MCF 10A (cell line): ENCODE measurements at regions of chr6 and their contacts with region 1.

Region 1: GRCh38 chr6:123802697-123803496 is 768 bp upstream of the NKAIN2 start:
- DNase-seq: peak; percentile 88
- H3K4me3 Mint-ChIP-seq: peak overlapping the region; percentile 83
- H3K27ac Mint-ChIP-seq: no peak overlapping the region
- H3K4me1 Mint-ChIP-seq: peaks cover 21% of the 10 kb centered on the region
- H3K27me3 Mint-ChIP-seq: no peaks in the 10 kb centered on the region
- CTCF ChIP-seq: peak; percentile 85

Region 2: GRCh38 chr6:123316733-123317323 is 486.1 kb before region 1 on chr6:
- CTCF ChIA-PET with region 1: no interaction called
- POLR2A ChIA-PET with region 1: no interaction called
- intact Hi-C with region 1: no loop called
- DNase-seq: peak; percentile 33
- H3K4me3 Mint-ChIP-seq: no peak overlapping the region
- H3K27ac Mint-ChIP-seq: no peak overlapping the region
- H3K4me1 Mint-ChIP-seq: no peaks in the 10 kb centered on the region
- H3K27me3 Mint-ChIP-seq: no peaks in the 10 kb centered on the region
- CTCF ChIP-seq: peak; percentile 53

Region 3: GRCh38 chr6:123788319-123788718 is 14.6 kb before region 1 on chr6:
- CTCF ChIA-PET with region 1: interaction called, 14 read pairs
- POLR2A ChIA-PET with region 1: no interaction called
- intact Hi-C with region 1: no loop called
- DNase-seq: no peak
- H3K4me3 Mint-ChIP-seq: no peak overlapping the region
- H3K27ac Mint-ChIP-seq: no peak overlapping the region
- H3K4me1 Mint-ChIP-seq: no peaks in the 10 kb centered on the region
- H3K27me3 Mint-ChIP-seq: no peaks in the 10 kb centered on the region
- CTCF ChIP-seq: no peak

Region 4: DNA sequence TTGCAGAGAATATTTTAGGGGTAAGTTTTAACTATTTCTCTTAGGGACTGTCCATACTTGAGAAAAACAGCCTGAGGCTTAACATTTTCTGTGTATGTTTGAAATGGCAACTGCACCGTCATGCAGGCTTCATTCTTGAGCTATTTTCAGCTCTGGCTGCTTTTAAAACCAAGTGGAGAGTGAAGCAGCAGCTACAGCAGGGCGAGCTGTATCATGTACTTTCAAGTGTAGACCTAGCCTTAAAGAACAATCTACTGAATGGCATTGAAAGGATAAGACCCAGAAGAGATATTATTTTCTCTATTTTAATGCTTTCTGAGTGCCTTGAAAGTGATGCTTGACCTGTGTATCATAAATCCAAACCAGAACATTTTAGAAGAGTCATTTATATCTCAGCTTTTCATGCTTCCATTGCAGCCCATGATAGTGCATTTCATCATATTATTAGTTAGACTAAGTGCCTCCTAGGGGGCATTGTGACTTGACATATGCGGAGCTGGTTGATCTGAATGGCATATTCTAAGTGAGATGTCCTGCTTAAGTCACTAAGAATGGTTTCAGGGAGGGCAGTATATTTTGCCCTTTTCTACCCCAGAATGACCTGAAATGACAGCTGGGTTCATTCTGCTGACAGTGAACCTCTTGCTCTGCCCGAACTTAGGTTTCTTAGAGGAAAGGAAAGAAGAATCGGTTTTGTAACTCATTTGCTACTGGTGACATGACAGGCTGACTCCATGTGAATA is 86.0 kb after region 1 on chr6:
- CTCF ChIA-PET with region 1: no interaction called
- POLR2A ChIA-PET with region 1: no interaction called
- intact Hi-C with region 1: no loop called
- DNase-seq: no peak
- H3K4me3 Mint-ChIP-seq: no peak overlapping the region
- H3K27ac Mint-ChIP-seq: no peak overlapping the region
- H3K4me1 Mint-ChIP-seq: peaks cover 5% of the 10 kb centered on the region
- H3K27me3 Mint-ChIP-seq: no peaks in the 10 kb centered on the region
- CTCF ChIP-seq: no peak

Region 5: GRCh38 chr6:124090491-124090890 is 287.6 kb after region 1 on chr6:
- CTCF ChIA-PET with region 1: no interaction called
- POLR2A ChIA-PET with region 1: no interaction called
- intact Hi-C with region 1: loop called (anchors 10 kb)
- DNase-seq: no peak
- H3K4me3 Mint-ChIP-seq: no peak overlapping the region
- H3K27ac Mint-ChIP-seq: no peak overlapping the region
- H3K4me1 Mint-ChIP-seq: peaks cover 6% of the 10 kb centered on the region
- H3K27me3 Mint-ChIP-seq: no peaks in the 10 kb centered on the region
- CTCF ChIP-seq: no peak

Region 6: DNA sequence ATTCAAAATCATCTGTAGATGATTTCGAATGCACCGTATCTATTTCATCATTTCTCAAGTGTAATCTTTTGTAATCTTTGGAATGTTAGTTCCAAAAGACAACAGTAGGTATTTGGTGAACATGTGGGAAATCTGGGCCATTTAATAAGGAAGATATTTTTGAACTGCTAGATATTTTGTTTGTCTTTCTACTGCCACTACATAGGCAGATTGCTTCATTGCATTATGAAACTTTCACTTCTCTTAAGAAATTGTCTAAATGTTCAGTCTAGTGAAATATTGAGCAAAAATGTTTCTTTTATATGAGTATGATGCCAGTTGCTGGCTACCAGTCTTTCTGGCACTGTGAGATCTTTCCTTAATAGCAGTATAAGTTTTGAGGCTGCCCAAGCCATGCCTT is 631.5 kb after region 1 on chr6:
- CTCF ChIA-PET with region 1: interaction called, 6 read pairs
- POLR2A ChIA-PET with region 1: interaction called, 3 read pairs
- intact Hi-C with region 1: loop called (anchors 1 kb)
- DNase-seq: peak; percentile 75
- H3K4me3 Mint-ChIP-seq: peak overlapping the region; percentile 10
- H3K27ac Mint-ChIP-seq: peak overlapping the region; percentile 93
- H3K4me1 Mint-ChIP-seq: peaks cover 40% of the 10 kb centered on the region
- H3K27me3 Mint-ChIP-seq: no peaks in the 10 kb centered on the region
- CTCF ChIP-seq: no peak

Region 7: DNA sequence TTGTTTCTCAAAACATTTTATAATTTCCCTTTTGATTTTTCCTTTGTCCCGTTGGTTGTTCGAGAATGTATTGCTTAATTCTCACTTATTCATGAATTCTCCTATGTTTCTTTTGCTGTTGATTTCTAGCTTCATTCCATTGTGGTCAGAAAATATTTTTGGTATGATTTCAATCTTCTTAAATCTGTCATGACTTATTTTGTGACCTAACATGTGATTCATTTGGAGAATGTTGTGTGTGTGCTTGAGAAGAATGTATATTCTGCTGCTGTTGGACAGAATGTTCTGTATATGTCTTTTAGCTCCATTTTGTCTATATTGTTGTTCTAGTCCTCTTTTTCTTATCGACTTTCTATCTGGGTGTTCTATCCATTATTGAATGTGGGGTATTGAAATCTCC is 873.1 kb after region 1 on chr6:
- CTCF ChIA-PET with region 1: no interaction called
- POLR2A ChIA-PET with region 1: no interaction called
- intact Hi-C with region 1: loop called (anchors 10 kb)
- DNase-seq: peak; percentile 59
- H3K4me3 Mint-ChIP-seq: peak overlapping the region; percentile 51
- H3K27ac Mint-ChIP-seq: peak overlapping the region; percentile 91
- H3K4me1 Mint-ChIP-seq: peaks cover 32% of the 10 kb centered on the region
- H3K27me3 Mint-ChIP-seq: no peaks in the 10 kb centered on the region
- CTCF ChIP-seq: no peak